ENCODE measurements at regions of chr9 and their contacts with region 1.

Region 1: DNA sequence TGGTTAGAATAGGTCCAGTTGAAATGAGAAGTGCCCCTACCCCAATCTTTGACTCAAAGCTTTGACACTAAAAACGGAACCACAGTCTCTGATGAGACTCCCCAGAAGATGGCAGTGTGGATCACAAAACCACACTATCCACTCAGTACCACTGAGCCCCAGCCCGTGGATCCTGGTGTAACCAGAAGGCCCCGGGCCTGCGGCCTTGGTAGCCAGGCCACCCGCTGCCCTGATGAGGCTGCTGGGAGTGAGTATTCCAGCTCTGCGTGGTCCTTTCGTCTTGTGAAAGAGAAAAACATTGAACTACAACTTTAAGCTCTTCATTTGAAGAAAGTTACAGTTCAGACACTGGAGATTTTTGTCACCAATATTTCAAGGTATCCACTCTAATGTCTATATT is 42.2 kb upstream of the FBP1 start:
- DNase-seq: peak; percentile 69
- H3K4me3 ChIP-seq: no peak overlapping the region
- H3K27ac ChIP-seq: no peak overlapping the region
- H3K4me1 ChIP-seq: no peaks in the 10 kb centered on the region
- H3K27me3 ChIP-seq: no peaks in the 10 kb centered on the region
- CTCF ChIP-seq: peak; percentile 56

Region 2: GRCh38 chr9:94772639-94773303 is 91.3 kb after region 1 on chr9:
- intact Hi-C with region 1: loop called (anchors 10 kb)
- DNase-seq: no peak
- H3K4me3 ChIP-seq: no peak overlapping the region
- H3K27ac ChIP-seq: no peak overlapping the region
- H3K4me1 ChIP-seq: no peaks in the 10 kb centered on the region
- H3K27me3 ChIP-seq: no peaks in the 10 kb centered on the region
- CTCF ChIP-seq: no peak

Region 3: DNA sequence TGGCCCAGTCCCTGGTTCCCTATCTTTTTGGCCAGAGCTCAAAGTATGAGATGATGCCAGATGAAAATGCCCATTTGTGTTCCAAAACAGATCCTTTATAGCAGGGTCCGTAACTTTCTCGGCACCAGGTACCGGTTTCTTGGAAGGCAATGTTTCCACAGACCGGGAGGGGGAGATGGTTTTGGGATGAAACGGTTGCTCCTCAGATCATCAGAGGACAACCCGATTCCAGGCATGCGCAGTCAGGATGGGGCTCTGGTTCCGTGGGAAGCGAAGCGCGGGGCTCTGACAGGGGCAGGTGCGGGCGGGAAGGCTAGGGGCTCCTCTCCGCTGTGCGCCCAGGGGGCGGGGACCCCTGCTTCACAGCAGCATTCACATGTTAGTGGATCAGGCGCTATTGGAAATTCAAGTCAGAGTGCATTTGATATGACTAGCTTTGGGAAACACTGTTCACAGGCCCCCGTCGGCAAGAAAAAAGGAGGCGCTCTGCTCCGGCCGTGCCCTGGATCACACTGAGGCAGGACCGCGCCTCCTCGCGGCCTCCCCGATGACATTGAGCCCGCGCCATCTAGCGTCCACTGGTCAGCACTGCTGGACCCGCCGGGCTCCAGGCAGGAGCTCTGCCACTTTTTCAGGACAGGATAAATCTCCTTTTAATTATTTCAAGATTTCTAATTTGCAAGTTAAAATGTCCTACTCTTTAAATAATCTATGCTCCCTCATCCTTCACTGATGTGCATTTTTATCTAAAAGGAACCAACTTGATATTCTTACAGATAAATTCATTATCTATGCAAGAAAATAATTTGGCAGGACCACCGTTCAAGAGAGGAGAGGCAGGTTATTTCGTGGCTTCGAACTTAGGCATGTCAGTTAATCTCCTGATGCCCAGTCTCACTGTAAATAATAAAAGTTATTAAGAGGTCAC is 446.0 kb after region 1 on chr9:
- intact Hi-C with region 1: loop called (anchors 5 kb)
- DNase-seq: peak; percentile 86
- H3K4me3 ChIP-seq: no peak overlapping the region
- H3K27ac ChIP-seq: no peak overlapping the region
- H3K4me1 ChIP-seq: no peaks in the 10 kb centered on the region
- H3K27me3 ChIP-seq: no peaks in the 10 kb centered on the region
- CTCF ChIP-seq: peak; percentile 90

Region 4: GRCh38 chr9:95678759-95679158 is 997.3 kb after region 1 on chr9:
- intact Hi-C with region 1: no loop called
- DNase-seq: no peak
- H3K4me3 ChIP-seq: no peak overlapping the region
- H3K27ac ChIP-seq: no peak overlapping the region
- H3K4me1 ChIP-seq: no peaks in the 10 kb centered on the region
- H3K27me3 ChIP-seq: no peaks in the 10 kb centered on the region
- CTCF ChIP-seq: no peak

Measured in colonic mucosa (tissue), 4 donors.